ENCODE measurements at regions of chr2 and their contacts with region 1.

Region 1: DNA sequence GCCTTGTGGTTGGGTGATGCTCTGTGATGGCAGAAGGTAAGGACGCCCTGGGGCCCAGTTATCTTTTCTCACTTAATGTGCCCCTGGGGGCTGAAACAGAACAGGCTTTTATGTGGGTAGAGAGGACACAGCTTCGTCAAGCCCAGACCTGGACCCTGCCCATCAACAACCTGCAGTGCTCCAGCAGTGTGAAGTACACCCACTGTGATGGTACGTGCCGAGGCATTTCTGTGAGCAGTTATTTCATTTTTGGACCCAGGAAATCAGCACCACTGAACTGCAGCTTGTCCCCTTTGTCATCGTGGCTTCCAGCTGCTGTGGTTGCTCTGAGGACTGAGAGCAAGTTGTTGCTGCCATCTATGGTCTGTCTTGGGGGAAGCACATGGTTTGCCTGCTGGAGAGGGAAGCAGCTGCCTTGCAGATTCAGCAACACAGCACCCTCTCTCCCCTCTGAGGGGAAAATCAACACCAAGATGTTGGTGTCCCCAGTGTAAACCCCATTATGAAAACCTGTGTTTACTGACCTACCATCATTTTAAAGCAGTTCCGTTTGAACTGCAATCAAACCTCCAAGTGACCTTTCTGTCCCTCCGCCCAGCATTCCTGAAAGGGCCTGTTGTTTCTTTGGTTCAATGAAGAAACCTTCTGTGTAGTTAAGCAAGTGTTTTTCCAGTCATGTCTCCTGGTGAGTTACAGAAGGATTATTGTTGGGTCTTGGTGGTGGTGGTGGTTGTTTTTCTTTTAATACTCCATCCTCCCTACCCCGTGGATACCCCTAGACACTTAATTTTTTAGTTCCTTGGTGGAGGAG is 158.2 kb downstream of the MGAT5 start:
- DNase-seq: peak; percentile 70
- H3K4me3 ChIP-seq: peak overlapping the region in 1 of 2 experiments; percentile 6; a peak in 1 of 4 replicates
- H3K27ac ChIP-seq: peak overlapping the region in 1 of 2 experiments; percentile 97; a peak in 2 of 4 replicates
- H3K4me1 ChIP-seq: peaks cover 33 to 43% of the 10 kb centered on the region in 2 experiments
- H3K27me3 ChIP-seq: no peaks in the 10 kb centered on the region
- CTCF ChIP-seq: peak; percentile 74
- EP300 ChIP-seq: no peak
- RAD21 ChIP-seq: peak; percentile 96

Region 2: DNA sequence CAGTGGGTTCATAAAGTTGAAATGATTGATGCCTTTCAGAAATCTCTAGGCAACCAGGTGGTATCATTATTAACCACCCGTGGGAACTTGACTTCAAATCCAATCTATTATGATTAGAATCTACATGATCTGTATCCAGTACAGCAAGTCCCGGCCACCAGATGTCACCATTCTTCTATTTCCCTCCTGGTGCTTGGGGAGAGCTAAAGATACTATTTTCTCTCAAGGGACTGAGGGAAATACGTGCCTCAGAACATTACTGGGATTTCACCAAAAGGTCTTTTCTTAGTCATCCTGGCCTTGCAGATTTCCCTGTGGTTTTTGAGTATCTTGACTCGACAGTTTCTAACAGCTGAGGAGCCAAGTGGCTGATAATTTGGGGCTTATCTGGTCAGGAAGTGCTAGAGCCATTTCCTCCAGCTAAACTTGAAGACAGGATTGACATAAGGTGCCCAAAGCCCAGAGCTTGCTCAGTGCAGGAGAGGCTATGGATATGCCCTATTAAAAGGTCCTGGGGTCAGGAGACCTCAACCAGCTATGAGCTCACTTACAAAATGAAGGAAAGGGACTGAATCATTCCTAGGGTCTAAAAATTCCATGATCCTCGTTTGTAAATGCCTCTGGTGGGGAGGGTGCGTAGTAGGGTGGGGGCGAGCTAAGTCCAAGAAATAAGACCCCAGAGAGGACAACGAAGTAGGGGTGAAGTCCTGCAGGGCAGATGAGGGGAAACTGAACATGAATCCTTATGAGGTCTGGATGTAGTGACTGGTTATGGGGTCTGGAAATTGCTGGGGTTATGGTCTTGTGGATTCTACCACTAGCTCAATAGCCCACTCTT is 293.5 kb before region 1 on chr2:
- CTCF ChIA-PET with region 1: interaction called, 175 read pairs
- POLR2A ChIA-PET with region 1: interaction called, 27 read pairs
- DNase-seq: peak; percentile 79
- H3K4me3 ChIP-seq: no peak overlapping the region; a peak in 1 of 4 replicates
- H3K27ac ChIP-seq: peak overlapping the region in 1 of 2 experiments; percentile 62; a peak in 2 of 4 replicates
- H3K4me1 ChIP-seq: peaks cover 0 to 28% of the 10 kb centered on the region in 2 experiments; a peak in 2 of 4 replicates
- H3K27me3 ChIP-seq: no peaks in the 10 kb centered on the region
- CTCF ChIP-seq: peak; percentile 89
- EP300 ChIP-seq: no peak
- RAD21 ChIP-seq: peak; percentile 97

Region 3: GRCh38 chr2:134245340-134245984 is 166.6 kb before region 1 on chr2:
- CTCF ChIA-PET with region 1: interaction called, 56 read pairs
- POLR2A ChIA-PET with region 1: interaction called, 6 read pairs
- DNase-seq: peak; percentile 43
- H3K4me3 ChIP-seq: no peak overlapping the region; a peak in 1 of 4 replicates
- H3K27ac ChIP-seq: peak overlapping the region in 1 of 2 experiments; percentile 79; a peak in 2 of 4 replicates
- H3K4me1 ChIP-seq: peaks cover 6 to 33% of the 10 kb centered on the region in 2 experiments; a peak in 3 of 4 replicates
- H3K27me3 ChIP-seq: no peaks in the 10 kb centered on the region
- CTCF ChIP-seq: peak; percentile 90
- EP300 ChIP-seq: no peak
- RAD21 ChIP-seq: peak; percentile 78

Region 4: DNA sequence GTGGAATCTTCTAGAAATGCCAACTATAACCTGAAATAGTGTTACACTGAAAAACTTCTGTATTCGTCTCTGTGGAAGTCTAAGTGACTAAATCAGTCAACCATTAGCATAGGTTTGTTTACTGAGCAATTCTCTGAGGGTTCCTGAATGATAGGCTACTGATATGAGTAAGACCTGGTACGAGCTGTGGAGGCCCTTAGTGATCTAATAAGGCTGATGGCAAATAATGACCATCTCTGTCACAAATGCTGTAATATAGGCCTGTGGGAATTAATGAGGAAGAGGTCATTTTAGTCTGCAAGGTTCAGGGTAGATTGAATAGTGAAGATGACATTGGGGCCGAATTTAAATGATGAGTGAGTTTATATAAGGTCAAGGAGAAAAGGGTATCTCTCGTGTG is 75.7 kb before region 1 on chr2:
- CTCF ChIA-PET with region 1: interaction called, 21 read pairs
- POLR2A ChIA-PET with region 1: interaction called, 13 read pairs
- DNase-seq: no peak
- H3K4me3 ChIP-seq: no peak overlapping the region
- H3K27ac ChIP-seq: peak overlapping the region in 1 of 2 experiments; percentile 100; a peak in 2 of 4 replicates
- H3K4me1 ChIP-seq: peaks cover 0 to 37% of the 10 kb centered on the region in 2 experiments; a peak in 2 of 4 replicates
- H3K27me3 ChIP-seq: no peaks in the 10 kb centered on the region
- CTCF ChIP-seq: no peak
- EP300 ChIP-seq: no peak
- RAD21 ChIP-seq: no peak

Region 5: GRCh38 chr2:134396493-134396892 is 15.5 kb before region 1 on chr2:
- CTCF ChIA-PET with region 1: interaction called, 41 read pairs
- POLR2A ChIA-PET with region 1: interaction called, 8 read pairs
- DNase-seq: no peak
- H3K4me3 ChIP-seq: no peak overlapping the region
- H3K27ac ChIP-seq: no peak overlapping the region
- H3K4me1 ChIP-seq: peaks cover 0 to 33% of the 10 kb centered on the region in 2 experiments; a peak in 1 of 4 replicates
- H3K27me3 ChIP-seq: no peaks in the 10 kb centered on the region
- CTCF ChIP-seq: no peak
- EP300 ChIP-seq: no peak
- RAD21 ChIP-seq: no peak

Region 6: DNA sequence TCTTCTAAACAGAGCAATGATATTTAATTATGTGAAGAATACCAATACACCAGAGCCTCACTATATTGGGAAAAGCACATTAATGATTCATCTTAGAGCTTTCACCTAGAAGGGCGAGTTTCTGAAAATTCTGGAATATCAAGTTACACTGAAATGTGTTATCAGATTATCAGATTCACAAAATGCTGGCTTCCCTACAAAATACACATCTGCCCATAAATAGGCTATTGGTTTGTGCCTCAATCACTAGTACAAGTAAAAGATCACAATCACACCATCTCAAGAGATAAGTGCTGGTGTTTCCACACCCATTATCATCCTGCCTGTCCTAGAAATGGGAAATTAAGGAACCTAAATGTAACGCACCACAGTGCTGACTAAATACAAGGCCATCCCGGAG is 106.1 kb after region 1 on chr2:
- CTCF ChIA-PET with region 1: no interaction called
- POLR2A ChIA-PET with region 1: no interaction called
- DNase-seq: no peak
- H3K4me3 ChIP-seq: no peak overlapping the region
- H3K27ac ChIP-seq: no peak overlapping the region
- H3K4me1 ChIP-seq: peaks cover 0 to 23% of the 10 kb centered on the region in 2 experiments; a peak in 2 of 4 replicates
- H3K27me3 ChIP-seq: no peaks in the 10 kb centered on the region
- CTCF ChIP-seq: no peak
- EP300 ChIP-seq: no peak
- RAD21 ChIP-seq: no peak

Measured in SK-N-SH (cell line).